Posterior vena cava (tissue), 2 donors: ENCODE measurements at regions of chr5 and their contacts with region 1.

Region 1: GRCh38 chr5:36414869-36415282 is 113.2 kb upstream of the RANBP3L start:
- DNase-seq: no peak

Region 2: GRCh38 chr5:36502608-36503007 is 87.7 kb after region 1 on chr5:
- intact Hi-C with region 1: loop called (anchors 5 kb)
- DNase-seq: no peak

Region 3: GRCh38 chr5:36690041-36690961 is 275.4 kb after region 1 on chr5:
- intact Hi-C with region 1: loop called in 1 of 2 experiments (anchors 5 kb)
- DNase-seq: peak; percentile 94